Ovary (tissue), 10 donors: ENCODE measurements at regions of chr5 and their contacts with region 1.

Region 1: DNA sequence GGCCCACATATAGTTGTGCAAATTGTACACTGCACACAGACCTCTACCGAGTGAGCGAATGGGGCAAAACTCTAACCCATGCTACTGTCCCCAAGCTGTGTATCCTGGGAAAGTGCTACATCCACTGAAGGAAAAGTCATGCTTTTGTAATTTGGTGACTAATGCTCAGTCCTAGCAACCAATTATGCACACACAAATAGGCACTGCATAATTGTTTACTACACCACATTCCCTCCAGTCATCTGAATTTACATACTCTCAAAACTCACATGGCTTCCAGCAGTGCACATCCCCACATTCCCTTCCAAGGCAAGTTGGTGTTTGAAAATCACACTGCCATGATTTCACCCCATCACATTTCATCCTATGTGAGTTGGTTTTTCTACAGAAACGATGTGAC is 125.9 kb upstream of the OSMR start:
- DNase-seq: no peak
- H3K4me3 ChIP-seq: no peak overlapping the region
- H3K27ac ChIP-seq: no peak overlapping the region
- H3K4me1 ChIP-seq: peaks cover 7% of the 10 kb centered on the region
- H3K27me3 ChIP-seq: no peaks in the 10 kb centered on the region
- CTCF ChIP-seq: no peak
- EP300 ChIP-seq: no peak
- POLR2A ChIP-seq: no peak

Region 2: DNA sequence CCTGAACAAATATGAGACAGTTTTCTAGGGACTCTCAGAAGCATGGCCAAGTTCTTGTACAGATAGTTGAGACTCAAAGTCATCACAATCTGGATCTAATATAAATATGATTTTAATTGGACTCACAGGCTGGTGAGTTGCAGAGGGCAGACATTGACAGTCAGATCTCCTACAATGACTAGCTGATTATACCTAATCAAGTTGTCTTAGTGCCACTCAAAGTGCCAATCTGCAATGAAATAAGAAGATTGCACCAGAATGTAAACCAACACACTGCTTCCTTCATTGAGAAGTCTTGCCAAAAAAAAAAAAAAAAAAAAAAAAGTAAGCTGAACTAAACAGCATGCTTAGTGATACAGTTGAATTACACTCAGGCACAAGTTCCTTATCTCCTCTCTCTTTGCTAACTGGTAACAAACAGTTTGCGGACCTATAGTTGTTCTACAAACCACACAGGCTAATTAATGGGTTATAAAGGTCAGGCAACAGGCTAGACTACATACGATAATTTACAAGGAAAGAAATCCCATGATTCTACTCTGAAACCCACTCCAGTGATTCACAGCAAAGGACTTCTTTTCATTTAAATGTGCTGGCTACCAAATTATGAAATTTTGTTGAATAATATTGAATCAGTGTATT is 1950.7 kb before region 1 on chr5:
- intact Hi-C with region 1: loop called in 1 of 4 experiments (anchors 5 kb)
- DNase-seq: no peak
- H3K4me3 ChIP-seq: no peak overlapping the region
- H3K27ac ChIP-seq: no peak overlapping the region
- H3K4me1 ChIP-seq: no peaks in the 10 kb centered on the region
- H3K27me3 ChIP-seq: no peaks in the 10 kb centered on the region
- CTCF ChIP-seq: no peak
- EP300 ChIP-seq: no peak
- POLR2A ChIP-seq: no peak

Region 3: DNA sequence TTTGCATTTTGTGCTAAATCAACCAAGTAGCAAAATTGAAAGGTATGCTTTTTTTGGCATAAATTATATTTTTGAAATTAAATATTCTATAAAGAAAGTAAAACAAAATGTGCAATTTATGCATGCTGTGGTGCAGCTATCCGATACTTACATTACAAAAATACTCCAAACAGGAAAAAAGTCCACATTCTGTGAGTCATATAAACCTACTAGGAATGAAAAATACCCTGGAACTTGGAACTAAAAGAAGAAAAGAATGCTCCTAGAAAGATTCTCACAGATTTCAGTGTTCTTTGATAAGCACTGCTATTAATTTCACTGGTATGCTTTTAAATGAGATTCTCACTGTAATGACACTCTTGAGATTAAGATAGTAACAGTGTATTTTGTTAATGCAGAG is 218.5 kb after region 1 on chr5:
- intact Hi-C with region 1: no loop called
- DNase-seq: no peak
- H3K4me3 ChIP-seq: no peak overlapping the region
- H3K27ac ChIP-seq: no peak overlapping the region
- H3K4me1 ChIP-seq: no peaks in the 10 kb centered on the region
- H3K27me3 ChIP-seq: no peaks in the 10 kb centered on the region
- CTCF ChIP-seq: no peak
- EP300 ChIP-seq: no peak
- POLR2A ChIP-seq: no peak